ENCODE measurements at regions of chr20 and their contacts with region 1.

Region 1: GRCh38 chr20:25247956-25248785 is at the start of gene PYGB:
- DNase-seq: peak; percentile 69
- H3K4me3 Mint-ChIP-seq: peak within 1 kb of the TSS; percentile 93
- H3K27ac Mint-ChIP-seq: peak within 1 kb of the TSS; percentile 82
- H3K4me1 Mint-ChIP-seq: peaks cover 35% of the 10 kb centered on the region
- H3K27me3 Mint-ChIP-seq: peaks cover 5% of the 10 kb centered on the region
- total RNA-seq, gene PYGB: 34.5 and 37.1 TPM in 2 replicates

Region 2: DNA sequence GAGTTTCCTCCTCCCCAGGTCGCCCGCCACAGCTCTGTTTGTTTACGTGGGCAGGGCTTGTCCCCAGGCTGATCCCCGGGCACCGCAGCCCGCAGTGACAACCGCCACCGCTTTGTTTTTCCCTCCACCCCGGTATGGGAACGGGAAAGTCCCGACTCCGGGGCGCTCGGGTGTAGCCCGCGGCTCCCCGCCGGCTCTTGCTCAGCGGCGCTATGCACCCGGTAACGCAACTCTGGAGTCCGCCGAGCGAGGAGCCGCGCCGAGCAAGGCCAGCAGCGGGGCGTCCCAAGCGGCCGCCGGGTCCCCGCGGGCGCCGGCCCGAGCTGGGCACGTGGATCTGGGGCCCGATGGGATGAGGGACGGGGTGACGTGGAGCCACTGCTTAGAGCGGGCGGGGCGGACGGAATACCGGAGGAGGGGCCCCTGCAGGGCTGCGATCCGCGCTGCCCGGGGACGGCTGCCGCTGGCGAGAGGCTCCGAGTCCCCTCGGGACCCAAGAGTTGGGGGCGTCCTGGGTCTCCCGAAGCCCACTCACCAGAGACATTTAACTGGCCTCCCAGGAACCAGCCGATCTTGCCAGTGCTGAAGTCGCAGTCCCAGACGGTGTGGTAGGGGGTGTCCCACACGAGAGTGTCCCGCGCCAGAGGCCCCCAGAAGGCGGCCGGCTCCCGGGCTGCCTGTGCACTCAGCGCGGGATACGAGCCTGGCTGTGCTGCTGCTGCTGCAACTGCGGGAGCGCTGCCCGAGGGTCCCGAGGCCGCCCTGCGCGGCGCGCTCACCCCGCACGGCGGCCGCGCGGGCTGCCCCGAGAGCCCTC is 190.7 kb before region 1 on chr20:
- intact Hi-C with region 1: loop called (anchors 5 kb)
- DNase-seq: peak; percentile 78
- H3K4me3 Mint-ChIP-seq: peak overlapping the region; percentile 76
- H3K27ac Mint-ChIP-seq: peak overlapping the region; percentile 64
- H3K4me1 Mint-ChIP-seq: peaks cover 30% of the 10 kb centered on the region
- H3K27me3 Mint-ChIP-seq: peaks cover 18% of the 10 kb centered on the region

Region 3: DNA sequence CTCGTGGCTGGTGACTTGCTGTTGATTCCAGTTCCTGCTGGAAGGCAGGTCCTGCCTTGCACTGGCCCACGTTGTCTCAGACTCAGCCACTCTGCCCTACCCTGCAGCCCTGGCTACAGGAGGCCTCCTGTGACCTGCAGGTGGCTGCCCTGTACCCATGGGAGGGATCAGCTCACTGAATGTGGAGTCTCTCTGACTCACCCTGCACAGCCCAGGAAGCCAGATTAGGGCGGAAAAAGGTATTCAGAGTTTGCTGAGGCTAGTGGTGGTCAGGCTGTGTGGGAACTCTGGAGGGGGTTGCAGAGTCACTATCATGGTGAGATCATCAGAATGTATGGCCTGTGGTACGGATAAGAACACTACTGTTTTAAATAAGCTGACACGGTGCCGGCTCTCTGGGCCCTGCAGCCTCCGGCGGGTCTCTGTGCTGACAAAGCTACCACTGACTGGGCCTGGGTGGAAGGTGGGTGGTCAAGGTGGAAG is 25.0 kb before region 1 on chr20:
- intact Hi-C with region 1: loop called (anchors 1 kb)
- DNase-seq: peak; percentile 18
- H3K4me3 Mint-ChIP-seq: no peak overlapping the region
- H3K27ac Mint-ChIP-seq: peak overlapping the region; percentile 30
- H3K4me1 Mint-ChIP-seq: peaks cover 7% of the 10 kb centered on the region
- H3K27me3 Mint-ChIP-seq: no peaks in the 10 kb centered on the region

Region 4: DNA sequence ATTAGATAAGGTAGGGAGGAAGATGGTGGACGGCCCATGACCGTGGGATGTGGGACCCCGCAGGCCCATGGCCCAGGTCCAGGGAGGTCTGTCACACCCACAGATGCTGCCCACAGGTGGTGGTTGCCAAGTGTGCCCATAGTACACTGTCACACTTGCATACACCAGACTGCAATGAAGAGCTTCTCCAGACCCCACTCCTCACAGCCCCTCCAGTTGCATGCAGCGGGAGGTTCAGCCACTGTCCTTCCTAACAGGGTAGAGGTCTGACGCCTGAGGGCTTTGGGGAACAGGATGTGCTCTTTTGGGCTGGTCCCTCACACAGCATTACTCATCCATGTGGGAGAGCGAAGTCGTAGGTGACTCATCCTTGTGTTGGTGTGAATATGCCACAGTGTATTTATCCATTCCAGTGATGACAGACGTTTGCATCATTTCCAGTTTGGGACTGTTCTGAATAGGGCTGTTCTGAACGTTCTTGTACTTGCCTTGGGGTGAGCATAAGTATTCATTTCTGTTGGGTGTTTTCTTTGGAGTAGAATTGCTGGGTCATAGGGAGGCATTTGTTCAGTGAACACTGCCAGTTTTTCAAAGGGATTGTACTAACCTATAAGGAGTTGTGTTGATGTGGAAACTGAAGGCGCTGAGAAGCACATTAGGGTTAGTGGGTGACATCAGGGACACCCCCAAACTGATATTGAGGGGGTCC is 10.4 kb before region 1 on chr20:
- intact Hi-C with region 1: loop called (anchors 1 kb)
- DNase-seq: peak; percentile 18
- H3K4me3 Mint-ChIP-seq: peak overlapping the region; percentile 32
- H3K27ac Mint-ChIP-seq: peak overlapping the region; percentile 87
- H3K4me1 Mint-ChIP-seq: peaks cover 17% of the 10 kb centered on the region
- H3K27me3 Mint-ChIP-seq: peaks cover 7% of the 10 kb centered on the region

Region 5: DNA sequence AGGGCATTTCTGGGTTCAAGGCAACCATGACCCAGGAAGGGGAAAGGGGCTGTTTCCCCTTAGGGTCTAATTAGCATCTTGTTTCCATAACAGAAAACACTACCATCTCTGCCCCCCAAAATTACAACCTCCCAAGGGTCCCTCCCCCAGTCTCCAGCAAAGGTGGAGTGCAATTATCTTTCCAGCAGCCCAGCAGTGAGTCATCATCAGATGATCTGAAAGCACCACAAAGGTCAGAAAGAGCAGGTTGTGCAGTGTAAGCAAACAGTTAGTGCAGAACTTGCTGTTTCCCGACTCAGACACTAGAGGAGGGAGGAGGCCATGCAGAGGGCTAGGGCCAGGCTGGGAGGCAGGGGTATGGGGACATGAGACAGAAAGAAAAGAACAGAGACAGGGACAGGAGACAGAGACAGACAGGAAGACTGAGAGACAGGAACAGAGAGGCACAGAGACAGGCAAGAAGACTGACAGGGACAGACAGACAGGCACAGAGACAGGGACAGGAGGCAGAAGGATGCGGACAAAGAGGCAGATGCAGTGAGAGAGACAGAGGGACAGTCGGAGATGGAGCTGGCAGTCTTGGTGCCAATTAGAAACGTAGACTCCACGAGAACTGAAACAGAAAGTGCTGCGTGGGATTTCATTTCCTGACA is 62.2 kb after region 1 on chr20:
- intact Hi-C with region 1: loop called (anchors 5 kb)
- DNase-seq: peak; percentile 59
- H3K4me3 Mint-ChIP-seq: peak overlapping the region; percentile 74
- H3K27ac Mint-ChIP-seq: peak overlapping the region; percentile 95
- H3K4me1 Mint-ChIP-seq: peaks cover 36% of the 10 kb centered on the region
- H3K27me3 Mint-ChIP-seq: no peaks in the 10 kb centered on the region

Region 6: DNA sequence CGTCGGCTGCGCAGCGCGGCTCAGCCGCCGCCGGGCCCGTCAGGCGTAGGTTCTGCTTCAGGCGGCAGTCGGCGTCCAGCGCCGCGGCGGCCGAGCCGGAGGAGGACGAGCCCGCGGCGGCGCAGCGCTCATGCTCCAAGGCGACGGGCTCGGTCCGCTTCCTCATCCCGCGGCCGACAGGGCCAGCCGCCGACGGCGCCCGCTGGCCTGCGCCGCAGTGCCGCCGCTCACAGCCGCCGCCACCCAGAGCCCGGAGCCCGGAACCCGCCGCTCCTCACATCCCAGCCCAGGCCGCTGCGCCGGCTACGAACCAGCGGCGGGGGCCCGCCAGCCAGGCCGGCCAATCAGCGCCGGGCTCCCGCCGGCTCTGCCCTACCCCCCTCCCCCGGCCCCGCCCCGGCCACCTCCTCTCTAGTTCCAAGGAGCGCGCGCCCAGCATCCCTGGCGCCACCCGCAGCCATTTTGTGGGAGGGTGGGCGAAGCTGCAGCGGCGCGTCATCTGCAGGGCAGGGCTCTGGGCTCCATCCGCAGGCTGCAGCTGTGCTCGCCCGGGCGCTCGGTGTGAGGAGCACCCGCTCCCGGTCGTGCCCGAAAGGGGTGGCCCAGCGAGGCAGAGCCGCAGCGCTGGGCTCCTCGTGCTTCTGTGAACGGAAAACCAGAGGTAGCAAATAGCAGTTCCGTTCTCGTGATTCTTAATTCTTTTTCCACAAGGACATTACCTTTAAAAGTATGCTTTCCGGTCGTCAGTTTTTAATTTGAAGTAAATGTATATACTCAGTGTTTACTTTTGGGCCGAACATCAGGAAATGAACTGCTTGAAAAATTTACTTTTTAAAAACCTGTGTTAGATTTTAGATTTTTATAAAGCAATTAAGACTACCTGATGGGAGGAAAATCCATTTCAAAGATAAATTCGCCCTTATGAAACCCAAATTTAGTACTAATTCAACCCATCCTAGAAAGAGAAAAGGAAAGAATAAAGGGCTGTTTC is 142.7 kb after region 1 on chr20 and contains the start of gene ABHD12:
- intact Hi-C with region 1: loop called (anchors 1 kb)
- DNase-seq: peak; percentile 94
- H3K4me3 Mint-ChIP-seq: peak within 1 kb of the TSS; percentile 86
- H3K27ac Mint-ChIP-seq: peak within 1 kb of the TSS; percentile 90
- H3K4me1 Mint-ChIP-seq: peaks cover 11% of the 10 kb centered on the region
- H3K27me3 Mint-ChIP-seq: no peaks in the 10 kb centered on the region
- total RNA-seq, gene ABHD12: 29.0 and 29.5 TPM in 2 replicates

Region 7: GRCh38 chr20:25407311-25408169 is 159.4 kb after region 1 on chr20 and contains the start of gene GINS1:
- intact Hi-C with region 1: loop called (anchors 5 kb)
- DNase-seq: peak; percentile 86
- H3K4me3 Mint-ChIP-seq: peak within 1 kb of the TSS; percentile 93
- H3K27ac Mint-ChIP-seq: peak within 1 kb of the TSS; percentile 92
- H3K4me1 Mint-ChIP-seq: peaks cover 20% of the 10 kb centered on the region
- H3K27me3 Mint-ChIP-seq: no peaks in the 10 kb centered on the region
- total RNA-seq, gene GINS1: 33.5 and 36.3 TPM in 2 replicates

Measured in activated T-helper 2 cell treated with anti-CD3 and anti-CD28 coated beads, Interferon-gamma antibody, Interleukin-2, Interleukin-4, amounts not matched to agents 10 μg/mL and 5 μg/mL and 100 μg/mL, durations not matched to agents 14 hours and 24 hours and 36 hours (primary cell).